GM12878 (cell line): ENCODE measurements at regions of chr6 and their contacts with region 1.

Region 1: DNA sequence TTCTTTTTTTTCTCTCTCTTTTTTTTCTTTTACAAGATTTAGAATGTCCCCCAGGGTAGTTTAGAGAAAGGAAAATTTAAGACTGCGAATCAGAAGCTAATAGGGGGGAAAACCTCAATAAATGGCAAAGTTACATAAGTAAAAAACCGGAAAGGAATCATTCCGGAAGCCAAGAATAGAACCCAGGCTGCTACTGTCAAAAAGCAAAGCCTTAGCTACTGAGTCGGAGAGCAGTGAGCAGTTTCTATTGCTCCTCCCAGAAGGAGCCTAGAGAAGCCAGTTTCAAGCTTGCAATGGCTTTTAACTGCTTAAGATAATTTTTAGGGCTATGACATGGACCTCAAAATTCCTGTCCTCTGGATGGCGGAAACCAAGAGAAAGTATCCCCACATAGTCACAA is 31.6 kb downstream of the SAMD5 start:
- DNase-seq: no peak
- ATAC-seq: no peak
- H3K4me3 ChIP-seq: no peak overlapping the region
- H3K27ac ChIP-seq: no peak overlapping the region
- H3K4me1 ChIP-seq: no peaks in the 10 kb centered on the region
- H3K27me3 ChIP-seq: no peaks in the 10 kb centered on the region
- CTCF ChIP-seq: no peak
- EP300 ChIP-seq: no peak
- POLR2A ChIP-seq: no peak
- RAD21 ChIP-seq: no peak

Region 2: GRCh38 chr6:146456886-146457285 is 1083.2 kb before region 1 on chr6:
- CTCF ChIA-PET with region 1: no interaction called
- POLR2A ChIA-PET with region 1: no interaction called
- RAD21 ChIA-PET with region 1: no interaction called
- SMC1A ChIA-PET with region 1: no interaction called
- in situ Hi-C with region 1: no loop called
- intact Hi-C with region 1: no loop called
- DNase-seq: no peak
- ATAC-seq: no peak
- H3K4me3 ChIP-seq: no peak overlapping the region
- H3K27ac ChIP-seq: no peak overlapping the region
- H3K4me1 ChIP-seq: no peaks in the 10 kb centered on the region
- H3K27me3 ChIP-seq: no peaks in the 10 kb centered on the region
- CTCF ChIP-seq: no peak
- EP300 ChIP-seq: no peak
- POLR2A ChIP-seq: no peak
- RAD21 ChIP-seq: no peak

Region 3: GRCh38 chr6:147506704-147507114 is 33.4 kb before region 1 on chr6:
- CTCF ChIA-PET with region 1: interaction called, 3 read pairs
- POLR2A ChIA-PET with region 1: interaction called, 10 read pairs
- RAD21 ChIA-PET with region 1: no interaction called
- SMC1A ChIA-PET with region 1: no interaction called
- in situ Hi-C with region 1: no loop called
- intact Hi-C with region 1: no loop called
- DNase-seq: no peak
- ATAC-seq: peak; percentile 83
- H3K4me3 ChIP-seq: no peak overlapping the region
- H3K27ac ChIP-seq: no peak overlapping the region
- H3K4me1 ChIP-seq: no peaks in the 10 kb centered on the region
- H3K27me3 ChIP-seq: peaks cover 8 to 16% of the 10 kb centered on the region in 2 experiments
- CTCF ChIP-seq: peak; percentile 45 to 51 (median 46); a peak in 5 of 6 replicates
- EP300 ChIP-seq: no peak
- POLR2A ChIP-seq: no peak
- RAD21 ChIP-seq: peak; percentile 65